AG04450 (cell line): ENCODE measurements at regions of chr1 and their contacts with region 1.

Region 1: GRCh38 chr1:213138892-213139291 is 87.9 kb downstream of the RPS6KC1 start:
- DNase-seq: no peak
- H3K4me3 ChIP-seq: no peak overlapping the region
- H3K27ac ChIP-seq: no peak overlapping the region
- H3K27me3 ChIP-seq: no peaks in the 10 kb centered on the region
- CTCF ChIP-seq: no peak

Region 2: GRCh38 chr1:213094446-213094845 is 44.4 kb before region 1 on chr1:
- CTCF ChIA-PET with region 1: no interaction called
- POLR2A ChIA-PET with region 1: interaction called, 10 read pairs
- DNase-seq: no peak
- H3K4me3 ChIP-seq: no peak overlapping the region
- H3K27ac ChIP-seq: no peak overlapping the region
- H3K27me3 ChIP-seq: no peaks in the 10 kb centered on the region
- CTCF ChIP-seq: no peak

Region 3: DNA sequence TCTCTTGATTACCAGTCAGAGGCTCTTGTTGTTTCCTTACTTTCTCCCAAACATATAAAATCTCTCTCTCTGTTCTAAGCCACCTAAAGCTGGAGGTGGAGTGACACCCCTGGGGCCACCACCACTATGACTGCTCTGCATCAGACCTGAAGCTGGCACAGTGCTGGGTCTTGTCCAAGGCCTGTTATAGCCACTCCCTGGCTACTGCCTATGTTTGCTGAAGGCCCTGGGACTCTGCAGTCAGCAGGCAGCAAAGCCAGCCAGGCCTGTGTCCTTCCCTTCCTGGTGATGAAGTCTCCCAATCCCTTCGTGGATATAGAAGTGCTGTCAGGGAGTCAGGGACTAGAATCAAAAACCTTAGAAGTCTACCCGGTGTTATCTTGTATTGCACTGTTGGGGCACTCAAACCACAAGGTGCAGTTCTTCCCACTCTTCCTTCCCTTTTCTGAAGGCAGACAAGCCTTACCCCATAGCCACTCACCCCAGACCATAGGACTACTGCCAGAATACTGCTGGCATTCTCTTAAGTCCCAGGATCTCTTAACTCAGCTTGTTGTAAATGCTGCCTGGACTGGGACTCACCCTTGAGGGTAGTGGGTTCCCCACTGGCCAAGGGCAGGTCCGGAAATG is 15.3 kb after region 1 on chr1:
- CTCF ChIA-PET with region 1: no interaction called
- POLR2A ChIA-PET with region 1: no interaction called
- DNase-seq: no peak
- H3K4me3 ChIP-seq: no peak overlapping the region
- H3K27ac ChIP-seq: no peak overlapping the region
- H3K27me3 ChIP-seq: no peaks in the 10 kb centered on the region
- CTCF ChIP-seq: no peak